ENCODE measurements at regions of chr11 and their contacts with region 1.

Region 1: DNA sequence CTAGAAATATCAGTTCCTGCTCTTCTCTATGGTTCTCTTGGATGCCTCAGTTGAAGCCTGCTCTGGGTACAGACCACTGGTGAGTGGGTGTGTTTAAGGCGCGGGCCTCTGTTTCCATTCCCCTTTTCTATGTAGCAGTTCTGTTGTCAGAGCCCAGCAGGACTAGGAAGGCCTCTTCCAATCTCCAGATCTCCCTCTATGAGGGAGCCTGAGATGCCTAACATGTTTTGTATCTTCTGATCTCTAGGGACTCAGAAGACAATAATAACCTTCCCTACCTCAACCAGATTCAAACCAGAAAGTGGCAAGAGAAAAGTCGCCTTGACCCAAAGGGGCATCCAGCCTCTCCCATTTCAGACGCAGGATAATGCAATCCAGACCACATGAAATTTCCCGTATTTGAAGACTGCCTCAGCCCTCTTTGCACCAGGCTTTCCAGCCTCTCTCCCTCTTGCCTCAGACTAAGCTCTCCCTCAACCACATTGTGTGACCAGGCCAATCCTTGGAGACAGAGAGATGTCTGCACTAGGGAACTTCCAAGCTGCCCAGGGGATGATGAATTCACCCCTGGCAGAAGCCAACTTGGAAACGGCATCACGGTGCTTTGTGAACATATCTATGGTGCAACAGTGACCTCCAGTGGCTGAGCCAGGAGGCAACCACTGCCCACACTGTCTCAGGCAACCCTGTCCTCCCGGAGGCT is 150.1 kb upstream of the UBASH3B start:
- DNase-seq: peak; percentile 7
- H3K4me3 Mint-ChIP-seq: no peak overlapping the region
- H3K27ac Mint-ChIP-seq: no peak overlapping the region
- H3K4me1 Mint-ChIP-seq: no peaks in the 10 kb centered on the region
- H3K27me3 Mint-ChIP-seq: peaks cover 16% of the 10 kb centered on the region

Region 2: DNA sequence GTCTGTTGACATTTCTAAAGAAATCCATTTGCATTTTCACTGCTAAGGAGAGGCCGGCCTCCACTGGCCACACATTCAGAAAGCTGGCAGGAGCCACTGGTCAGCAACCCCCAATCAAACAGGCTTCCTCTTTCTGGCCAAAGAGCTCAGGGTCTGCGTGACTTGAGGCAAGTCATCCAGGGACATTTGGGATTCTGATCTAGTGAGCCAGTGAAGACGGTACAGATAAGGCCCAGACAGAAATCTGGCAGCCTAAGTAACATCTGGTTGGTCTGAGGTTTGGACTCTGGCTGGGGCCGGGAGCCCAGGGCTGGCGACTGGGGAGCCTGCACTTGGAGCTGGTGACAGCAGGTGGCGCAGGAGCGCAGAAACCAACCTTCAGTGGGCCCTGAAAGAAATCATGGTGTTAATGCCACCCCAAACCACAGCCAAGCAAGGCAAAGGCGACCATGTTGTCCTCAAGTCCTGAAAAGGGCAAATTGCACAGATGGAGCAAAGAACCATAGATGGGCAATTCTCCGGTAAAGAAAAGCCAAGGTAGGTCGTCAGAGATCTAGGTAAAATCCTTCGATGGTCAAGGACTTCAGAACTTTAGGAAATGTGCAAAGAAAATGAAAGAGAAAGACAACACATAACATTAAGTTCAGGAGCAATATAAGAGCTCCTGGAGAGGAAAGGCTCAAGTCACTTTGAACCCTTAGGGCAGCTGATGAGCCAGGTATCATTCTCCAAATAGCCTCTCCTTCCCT is 290.0 kb before region 1 on chr11:
- intact Hi-C with region 1: loop called (anchors 1 kb)
- DNase-seq: peak; percentile 1
- H3K4me3 Mint-ChIP-seq: no peak overlapping the region
- H3K27ac Mint-ChIP-seq: no peak overlapping the region
- H3K4me1 Mint-ChIP-seq: no peaks in the 10 kb centered on the region
- H3K27me3 Mint-ChIP-seq: peaks cover 8% of the 10 kb centered on the region

Region 3: GRCh38 chr11:122344274-122344673 is 161.2 kb before region 1 on chr11:
- intact Hi-C with region 1: no loop called
- DNase-seq: no peak
- H3K4me3 Mint-ChIP-seq: no peak overlapping the region
- H3K27ac Mint-ChIP-seq: no peak overlapping the region
- H3K4me1 Mint-ChIP-seq: no peaks in the 10 kb centered on the region
- H3K27me3 Mint-ChIP-seq: no peaks in the 10 kb centered on the region

Region 4: DNA sequence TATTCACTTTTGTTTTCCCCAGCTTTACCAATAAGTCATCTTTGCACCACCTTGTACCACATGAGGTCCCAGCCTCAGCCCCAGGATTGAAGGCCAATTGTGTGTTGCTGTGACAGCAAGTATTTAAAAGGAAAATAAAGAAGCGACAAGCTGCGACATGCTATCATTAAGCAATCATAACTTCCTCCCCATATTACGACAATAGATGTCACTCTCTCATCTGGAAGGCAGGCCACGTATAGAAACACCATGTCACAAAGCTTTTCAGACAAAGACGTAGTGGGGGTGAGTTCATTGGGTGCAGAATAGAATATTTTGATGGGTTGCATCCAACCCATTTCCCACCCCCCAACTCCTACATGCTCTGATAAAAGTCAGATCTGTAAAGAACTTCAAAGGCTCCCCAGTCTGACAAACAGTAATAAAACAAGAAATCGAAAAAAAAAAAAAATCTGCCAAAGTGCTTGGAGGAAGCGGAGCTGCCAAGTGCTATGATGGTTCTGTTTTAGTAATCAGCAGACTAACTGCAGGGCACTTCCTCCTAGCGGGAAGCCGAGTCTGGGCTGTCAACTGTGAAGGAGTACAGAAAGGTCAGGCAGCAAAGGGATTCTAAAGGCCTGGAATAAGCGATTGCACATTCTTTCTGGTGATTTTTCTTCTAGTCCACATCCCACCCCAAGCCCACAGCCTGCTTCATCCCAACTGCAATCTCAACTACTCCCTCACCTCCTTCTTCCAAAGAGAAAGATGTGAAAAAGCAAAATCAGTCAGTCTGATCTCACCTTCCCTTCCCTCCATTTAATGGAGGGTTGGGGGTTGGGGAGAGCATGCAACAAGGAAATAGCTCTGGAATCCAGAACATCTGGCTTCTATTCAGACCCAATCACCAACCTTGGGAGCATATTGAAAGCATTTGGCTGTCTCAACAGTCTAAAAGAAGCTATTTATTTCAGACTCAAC is 18.7 kb after region 1 on chr11:
- intact Hi-C with region 1: no loop called
- DNase-seq: no peak
- H3K4me3 Mint-ChIP-seq: no peak overlapping the region
- H3K27ac Mint-ChIP-seq: no peak overlapping the region
- H3K4me1 Mint-ChIP-seq: no peaks in the 10 kb centered on the region
- H3K27me3 Mint-ChIP-seq: peaks cover 17% of the 10 kb centered on the region

Region 5: GRCh38 chr11:122559734-122560382 is 54.4 kb after region 1 on chr11:
- intact Hi-C with region 1: no loop called
- DNase-seq: no peak
- H3K4me3 Mint-ChIP-seq: no peak overlapping the region
- H3K27ac Mint-ChIP-seq: no peak overlapping the region
- H3K4me1 Mint-ChIP-seq: no peaks in the 10 kb centered on the region
- H3K27me3 Mint-ChIP-seq: peaks cover 12% of the 10 kb centered on the region